Activated T-helper 1 cell treated with anti-CD3 and anti-CD28 coated beads, Interleukin-12 subunit alpha, Interleukin-12 subunit beta, Interleukin-2, Interleukin-4 antibody, amounts not matched to agents 30 ng/mL and 10 ng/mL and 1 ng/mL, durations not matched to agents 14 hours and 24 hours and 36 hours (primary cell): ENCODE measurements at regions of chr11 and their contacts with region 1.

Region 1: DNA sequence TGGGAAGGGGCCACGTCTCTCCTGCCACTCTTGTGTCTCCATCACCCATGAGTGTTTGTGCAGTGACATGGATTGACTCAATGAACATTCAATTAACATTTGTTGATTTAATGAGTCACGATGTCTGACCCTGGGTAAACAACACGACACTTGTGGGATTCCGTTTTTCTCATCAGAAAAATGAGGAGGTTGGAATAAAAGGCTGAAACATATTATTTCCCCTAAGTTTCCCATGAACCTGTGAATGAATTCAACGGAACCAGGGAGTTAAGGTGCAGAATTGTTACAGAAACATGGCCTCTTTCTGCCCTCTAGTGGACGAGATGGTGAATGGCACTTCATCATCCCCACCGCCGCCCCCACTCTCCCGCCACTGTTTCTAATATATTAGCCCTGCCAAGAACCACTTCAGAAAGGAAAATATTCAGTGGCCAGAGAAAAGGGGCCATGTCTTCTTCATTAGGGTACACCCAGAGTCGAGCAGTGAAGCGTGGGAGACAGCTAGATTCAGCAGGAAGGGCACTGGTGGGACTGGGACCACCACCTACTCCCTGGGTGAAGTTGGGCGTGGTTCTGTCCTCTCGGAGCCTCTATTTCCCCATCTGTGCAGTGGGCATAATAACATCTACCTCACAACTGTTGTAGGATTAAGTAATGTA is 46.3 kb upstream of the SYT13 start:
- DNase-seq: no peak
- H3K4me3 Mint-ChIP-seq: no peak overlapping the region
- H3K27ac Mint-ChIP-seq: no peak overlapping the region
- H3K4me1 Mint-ChIP-seq: no peaks in the 10 kb centered on the region
- H3K27me3 Mint-ChIP-seq: peaks cover 11% of the 10 kb centered on the region

Region 2: GRCh38 chr11:44927174-44927661 is 405.2 kb before region 1 on chr11:
- intact Hi-C with region 1: loop called (anchors 2 kb)
- DNase-seq: peak; percentile 22
- H3K4me3 Mint-ChIP-seq: no peak overlapping the region
- H3K27ac Mint-ChIP-seq: no peak overlapping the region
- H3K4me1 Mint-ChIP-seq: peaks cover 6% of the 10 kb centered on the region
- H3K27me3 Mint-ChIP-seq: peaks cover 5% of the 10 kb centered on the region

Region 3: GRCh38 chr11:44936525-44936924 is 395.9 kb before region 1 on chr11:
- intact Hi-C with region 1: loop called (anchors 2 kb)
- DNase-seq: peak; percentile 70
- H3K4me3 Mint-ChIP-seq: no peak overlapping the region
- H3K27ac Mint-ChIP-seq: no peak overlapping the region
- H3K4me1 Mint-ChIP-seq: no peaks in the 10 kb centered on the region
- H3K27me3 Mint-ChIP-seq: peaks cover 5% of the 10 kb centered on the region

Region 4: GRCh38 chr11:45048870-45049691 is 283.3 kb before region 1 on chr11:
- intact Hi-C with region 1: no loop called
- DNase-seq: no peak
- H3K4me3 Mint-ChIP-seq: no peak overlapping the region
- H3K27ac Mint-ChIP-seq: no peak overlapping the region
- H3K4me1 Mint-ChIP-seq: peaks cover 9% of the 10 kb centered on the region
- H3K27me3 Mint-ChIP-seq: peaks cover 3% of the 10 kb centered on the region

Region 5: GRCh38 chr11:45110562-45110961 is 221.8 kb before region 1 on chr11:
- intact Hi-C with region 1: loop called (anchors 1 kb)
- DNase-seq: no peak
- H3K4me3 Mint-ChIP-seq: no peak overlapping the region
- H3K27ac Mint-ChIP-seq: no peak overlapping the region
- H3K4me1 Mint-ChIP-seq: no peaks in the 10 kb centered on the region
- H3K27me3 Mint-ChIP-seq: peaks cover 27% of the 10 kb centered on the region

Region 6: DNA sequence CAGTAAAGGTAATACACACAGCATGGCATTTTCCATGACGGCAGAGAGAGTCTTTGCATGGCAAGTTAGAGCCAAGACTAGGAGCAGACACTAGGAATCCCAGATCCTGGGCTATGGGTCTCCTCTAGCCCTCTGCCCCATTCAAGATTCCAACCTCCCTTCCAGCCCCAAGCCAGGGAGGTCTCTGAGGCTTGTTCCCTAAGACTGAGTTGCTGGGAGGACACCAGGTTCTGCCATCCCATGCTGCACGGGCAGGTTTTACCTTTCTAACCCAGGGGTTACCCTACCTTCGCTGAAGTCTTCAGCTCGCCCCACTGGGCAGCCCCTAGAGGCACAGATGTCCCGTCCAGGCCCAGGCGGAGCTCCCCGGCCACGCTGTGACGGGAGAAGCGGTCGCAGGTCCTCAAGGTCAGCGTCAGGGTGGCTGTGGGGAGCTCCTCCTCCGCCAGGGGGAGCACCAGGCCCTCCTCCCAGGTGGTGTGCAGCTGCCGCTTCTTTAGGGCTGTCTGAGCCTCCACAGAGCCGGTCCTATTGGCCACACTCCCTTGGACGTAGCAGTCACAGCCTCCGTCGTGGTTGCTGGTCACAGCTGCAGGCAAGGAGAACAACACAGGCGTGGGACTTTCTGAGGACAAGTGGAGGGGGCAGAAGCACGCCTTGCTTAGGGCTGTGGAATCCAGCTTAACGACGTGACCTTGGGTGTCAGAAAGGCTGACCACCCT is 80.1 kb before region 1 on chr11:
- intact Hi-C with region 1: loop called (anchors 2 kb)
- DNase-seq: no peak
- H3K4me3 Mint-ChIP-seq: no peak overlapping the region
- H3K27ac Mint-ChIP-seq: no peak overlapping the region
- H3K4me1 Mint-ChIP-seq: no peaks in the 10 kb centered on the region
- H3K27me3 Mint-ChIP-seq: peaks cover 2% of the 10 kb centered on the region

Region 7: GRCh38 chr11:45362636-45363035 is 30.2 kb after region 1 on chr11:
- intact Hi-C with region 1: no loop called
- DNase-seq: no peak
- H3K4me3 Mint-ChIP-seq: no peak overlapping the region
- H3K27ac Mint-ChIP-seq: no peak overlapping the region
- H3K4me1 Mint-ChIP-seq: no peaks in the 10 kb centered on the region
- H3K27me3 Mint-ChIP-seq: peaks cover 31% of the 10 kb centered on the region